Lower leg skin (tissue), 4 donors: ENCODE measurements at regions of chr13 and their contacts with region 1.

Region 1: GRCh38 chr13:59677966-59678814 is 485.5 kb downstream of the DIAPH3 start:
- DNase-seq: no peak
- H3K4me3 ChIP-seq: no peak overlapping the region
- CTCF ChIP-seq: no peak
- POLR2A ChIP-seq: no peak

Region 2: GRCh38 chr13:58488251-58488650 is 1189.9 kb before region 1 on chr13:
- intact Hi-C with region 1: loop called (anchors 5 kb)
- DNase-seq: no peak
- H3K4me3 ChIP-seq: no peak overlapping the region
- CTCF ChIP-seq: no peak
- POLR2A ChIP-seq: no peak

Region 3: DNA sequence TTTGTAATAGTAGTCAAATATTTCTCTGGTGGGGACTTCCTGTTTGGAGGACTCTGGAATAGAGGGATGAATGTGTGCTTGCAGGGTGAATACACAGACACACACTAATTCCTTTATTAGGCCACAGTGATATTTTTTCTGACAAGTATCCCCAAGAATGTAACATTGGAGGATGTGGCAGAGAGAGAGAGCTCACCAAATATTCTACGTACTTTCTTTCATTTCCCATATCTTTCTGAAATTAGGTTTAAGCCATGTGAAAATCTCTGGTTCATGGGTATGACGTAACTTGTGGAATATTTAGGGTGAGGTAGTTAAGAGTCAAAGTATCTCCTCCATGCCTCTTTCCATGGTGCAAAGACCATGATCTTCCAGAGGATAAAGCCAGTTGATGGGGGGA is 22.1 kb after region 1 on chr13:
- intact Hi-C with region 1: no loop called
- DNase-seq: no peak
- H3K4me3 ChIP-seq: no peak overlapping the region
- CTCF ChIP-seq: no peak
- POLR2A ChIP-seq: no peak

Region 4: DNA sequence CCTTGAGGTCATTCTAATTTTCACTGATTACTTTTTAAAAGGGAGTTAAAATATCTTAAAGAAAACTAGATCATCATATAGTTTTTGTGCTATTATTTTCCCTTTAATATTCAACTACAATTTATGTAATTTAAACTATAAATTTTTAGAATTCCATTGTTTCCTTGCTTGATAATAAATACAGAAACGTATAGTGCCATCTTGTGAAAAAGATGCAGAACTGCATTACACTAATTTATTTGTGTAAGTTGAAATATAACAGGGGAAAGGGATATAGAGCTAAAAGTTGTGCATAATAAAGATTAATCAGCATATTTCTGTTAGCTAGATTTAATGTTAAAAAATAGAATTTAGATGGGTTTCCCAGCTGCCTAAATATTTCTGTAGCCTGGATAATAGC is 657.3 kb after region 1 on chr13:
- intact Hi-C with region 1: loop called (anchors 10 kb)
- DNase-seq: no peak
- H3K4me3 ChIP-seq: no peak overlapping the region
- CTCF ChIP-seq: no peak
- POLR2A ChIP-seq: no peak